Cardiac septum (tissue), 1 donor: ENCODE measurements at regions of chr15 and their contacts with region 1.

Region 1: GRCh38 chr15:24645627-24646026 is 29.9 kb upstream of the NPAP1 start:
- DNase-seq: no peak

Region 2: DNA sequence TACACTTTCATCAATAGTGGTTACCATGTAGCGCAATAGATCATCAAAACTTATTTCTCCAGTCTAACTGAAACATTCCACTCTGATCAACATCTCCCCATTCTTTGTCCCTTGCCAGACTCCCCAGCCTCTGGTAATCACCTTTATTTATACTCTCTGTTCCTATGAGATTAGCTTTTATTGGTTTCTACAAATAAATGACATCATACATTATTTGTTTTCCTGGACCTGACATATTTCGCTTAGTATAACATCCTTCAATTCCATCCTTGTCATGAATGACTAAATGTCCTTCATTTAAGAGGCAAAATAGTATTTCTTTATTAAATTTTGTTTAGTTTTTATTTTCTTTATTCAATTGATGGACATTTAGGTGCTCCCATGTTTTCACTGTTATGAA is 15.9 kb after region 1 on chr15:
- intact Hi-C with region 1: loop called (anchors 2 kb)
- DNase-seq: no peak

Region 3: DNA sequence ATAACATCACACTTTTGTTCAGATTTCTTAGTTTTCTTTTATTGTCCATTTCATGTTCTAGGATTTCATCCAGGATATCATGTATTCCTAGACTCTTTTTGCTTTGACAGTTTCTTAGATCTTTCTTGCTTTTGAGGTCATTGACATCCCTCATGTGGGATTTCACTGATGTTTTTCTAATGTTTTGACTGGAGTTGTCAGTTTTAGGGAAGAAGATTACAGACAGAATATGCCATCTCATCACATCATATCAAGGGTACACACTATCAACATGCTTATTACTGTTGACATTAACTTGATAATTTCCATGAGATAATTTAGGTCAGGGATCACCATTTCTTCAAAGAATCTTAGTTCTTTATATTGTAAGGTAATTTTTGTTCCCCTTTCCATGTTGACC is 131.7 kb after region 1 on chr15:
- intact Hi-C with region 1: no loop called
- DNase-seq: no peak

Region 4: GRCh38 chr15:24832282-24832681 is 186.7 kb after region 1 on chr15:
- intact Hi-C with region 1: no loop called
- DNase-seq: no peak

Region 5: DNA sequence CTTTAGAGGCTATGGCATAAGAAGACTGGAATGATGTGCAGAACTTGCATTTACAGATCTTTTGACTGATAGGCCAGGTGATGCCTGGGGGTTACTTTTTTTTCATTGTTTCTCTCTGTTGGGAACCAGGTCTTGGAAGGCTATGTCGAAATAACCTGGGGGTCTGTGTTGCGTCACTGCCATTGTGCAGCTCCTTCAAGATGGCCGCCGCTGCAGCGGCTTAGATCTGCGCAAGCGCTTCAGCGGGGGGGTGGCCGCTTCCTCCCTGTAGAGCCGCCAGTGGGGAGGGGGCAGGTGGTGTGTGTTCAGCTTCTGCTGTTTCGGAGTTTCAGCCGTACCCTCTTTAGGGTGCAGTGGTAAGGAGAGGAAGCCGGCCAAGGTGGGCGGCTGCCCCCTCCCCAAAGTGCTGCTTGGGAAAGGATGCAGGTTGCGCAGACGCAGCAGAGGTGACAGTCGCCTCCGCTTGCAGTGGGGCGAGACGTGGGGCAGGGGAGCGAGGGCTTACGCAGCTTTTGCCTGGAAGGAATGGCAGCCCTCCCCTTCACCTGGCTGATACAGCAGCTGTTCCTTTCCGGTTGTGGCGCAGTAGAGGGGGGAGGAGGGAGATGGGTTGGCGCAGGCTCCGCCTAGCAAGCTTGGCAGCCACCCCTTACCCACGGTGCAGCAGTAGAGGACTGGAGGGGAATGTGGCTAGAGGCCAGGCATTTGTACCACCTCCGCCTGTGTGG is 310.6 kb after region 1 on chr15:
- intact Hi-C with region 1: no loop called
- DNase-seq: peak; percentile 81